Common myeloid progenitor, CD34-positive (primary cell): ENCODE measurements at regions of chr1 and their contacts with region 1.

Region 1: DNA sequence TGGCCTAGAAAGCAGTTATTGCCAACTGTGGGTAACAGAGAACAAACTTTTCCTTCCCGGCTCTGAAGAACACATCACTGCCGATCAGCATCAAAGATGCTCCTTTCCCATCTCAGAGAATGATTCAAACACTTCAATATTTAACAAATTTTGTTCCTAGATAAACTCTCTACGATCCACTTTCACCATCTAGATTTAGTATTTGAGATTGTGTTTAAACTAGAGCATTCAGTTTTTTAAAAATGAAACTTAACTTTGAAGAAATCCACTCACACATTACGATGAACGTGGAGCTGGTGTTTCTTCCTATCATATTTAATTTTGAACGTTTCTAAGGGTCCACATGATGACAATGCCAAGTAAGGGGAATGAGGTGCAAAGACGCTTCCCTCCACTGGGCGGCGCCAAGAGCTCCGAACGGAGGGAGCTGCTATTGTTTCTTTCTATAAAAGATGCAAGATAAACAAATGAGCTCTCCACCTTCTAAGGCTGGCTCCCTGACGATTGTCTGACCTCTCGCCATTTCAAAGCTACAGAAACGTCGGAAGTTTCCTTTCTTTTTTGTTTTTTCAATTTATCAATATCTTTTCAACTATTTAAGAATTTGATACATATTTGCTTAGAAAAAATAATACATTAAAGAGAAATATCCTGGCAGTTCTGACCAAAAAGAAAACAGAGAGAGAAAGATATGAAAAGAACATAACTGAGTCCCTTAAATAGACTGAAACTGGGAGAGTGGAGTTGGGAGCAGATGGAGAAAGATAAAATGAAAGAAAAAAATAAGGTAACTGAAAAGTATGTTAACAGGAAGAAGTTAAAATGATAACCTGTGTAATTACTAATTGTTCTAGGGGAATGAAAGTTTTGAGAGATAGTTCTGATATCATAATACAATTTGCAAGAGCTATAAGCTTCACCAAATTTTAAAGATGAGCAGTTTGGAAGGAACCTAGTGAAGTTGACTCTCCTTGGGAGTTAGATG is 4.4 kb upstream of the BARHL2 start:
- DNase-seq: peak; percentile 77 to 85 (median 84)
- H3K4me3 ChIP-seq: no peak overlapping the region
- H3K27ac ChIP-seq: no peak overlapping the region
- H3K4me1 ChIP-seq: peaks cover 2 to 44% (median 32%) of the 10 kb centered on the region in 4 experiments
- H3K27me3 ChIP-seq: peaks cover 25 to 99% (median 64%) of the 10 kb centered on the region in 5 experiments

Region 2: DNA sequence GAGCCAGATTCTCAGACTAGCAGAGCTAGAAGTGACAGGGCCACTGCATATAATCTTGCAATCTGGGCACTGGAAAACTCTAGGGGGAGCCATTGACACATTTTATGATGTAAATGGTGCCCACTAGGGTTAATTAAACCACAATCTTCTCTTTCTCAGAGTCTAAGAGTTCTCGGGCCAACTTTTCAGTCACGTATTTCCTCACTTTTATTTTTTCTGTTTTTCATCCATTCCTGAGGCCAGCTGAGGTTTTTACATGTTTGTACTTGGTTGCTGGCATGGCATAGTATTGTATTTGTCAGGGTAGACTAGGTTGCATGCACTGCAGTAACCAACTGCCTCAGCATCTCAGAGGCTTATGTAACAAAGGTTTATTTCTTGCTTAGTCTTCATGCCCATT is 588.4 kb before region 1 on chr1:
- CTCF ChIA-PET with region 1: interaction called, 12 read pairs
- POLR2A ChIA-PET with region 1: no interaction called
- DNase-seq: peak; percentile 64 to 85 (median 82)
- H3K4me3 ChIP-seq: no peak overlapping the region
- H3K27ac ChIP-seq: no peak overlapping the region
- H3K4me1 ChIP-seq: no peaks in the 10 kb centered on the region
- H3K27me3 ChIP-seq: peaks cover 2 to 17% (median 12%) of the 10 kb centered on the region in 5 experiments

Region 3: GRCh38 chr1:90707363-90707710 is 14.2 kb before region 1 on chr1:
- CTCF ChIA-PET with region 1: interaction called, 16 read pairs
- POLR2A ChIA-PET with region 1: no interaction called
- DNase-seq: peak in 2 of 3 donors; percentile 56 to 62
- H3K4me3 ChIP-seq: peak overlapping the region in 3 of 7 experiments; percentile 21 to 69 (median 53)
- H3K27ac ChIP-seq: no peak overlapping the region
- H3K4me1 ChIP-seq: peaks cover 1 to 16% (median 14%) of the 10 kb centered on the region in 4 experiments
- H3K27me3 ChIP-seq: peaks cover 45 to 98% (median 56%) of the 10 kb centered on the region in 5 experiments

Region 4: GRCh38 chr1:90746857-90747256 is 25.4 kb after region 1 on chr1:
- CTCF ChIA-PET with region 1: no interaction called
- POLR2A ChIA-PET with region 1: no interaction called
- DNase-seq: no peak
- H3K4me3 ChIP-seq: no peak overlapping the region
- H3K27ac ChIP-seq: no peak overlapping the region
- H3K4me1 ChIP-seq: no peaks in the 10 kb centered on the region
- H3K27me3 ChIP-seq: peaks cover 4 to 34% (median 11%) of the 10 kb centered on the region in 5 experiments